Posterior vena cava (tissue), 2 donors: ENCODE measurements at regions of chr16 and their contacts with region 1.

Region 1: GRCh38 chr16:61149709-61150108 is 886.5 kb downstream of the CDH8 start:
- DNase-seq: peak; percentile 35

Region 2: GRCh38 chr16:61277840-61278239 is 128.1 kb after region 1 on chr16:
- intact Hi-C with region 1: no loop called
- DNase-seq: no peak

Region 3: DNA sequence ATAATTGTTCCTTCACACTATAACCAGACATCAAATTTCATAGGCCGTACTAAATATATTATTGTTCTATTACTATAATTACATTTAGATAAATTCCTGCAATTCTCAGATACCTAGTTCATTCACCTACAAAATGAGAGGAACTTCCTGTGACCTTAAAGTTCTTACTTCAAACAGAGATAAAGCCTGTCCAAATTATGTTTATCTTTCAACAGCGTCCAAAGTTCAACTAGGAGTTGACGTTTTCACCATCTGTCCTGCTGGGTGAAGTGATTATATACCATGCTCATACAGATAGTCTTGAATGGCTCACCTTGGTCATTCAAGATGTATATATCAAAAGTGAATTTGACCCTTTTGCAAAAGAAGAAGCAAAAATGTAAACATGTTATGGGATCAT is 445.9 kb after region 1 on chr16:
- intact Hi-C with region 1: loop called in 1 of 2 experiments (anchors 5 kb)
- DNase-seq: no peak

Region 4: DNA sequence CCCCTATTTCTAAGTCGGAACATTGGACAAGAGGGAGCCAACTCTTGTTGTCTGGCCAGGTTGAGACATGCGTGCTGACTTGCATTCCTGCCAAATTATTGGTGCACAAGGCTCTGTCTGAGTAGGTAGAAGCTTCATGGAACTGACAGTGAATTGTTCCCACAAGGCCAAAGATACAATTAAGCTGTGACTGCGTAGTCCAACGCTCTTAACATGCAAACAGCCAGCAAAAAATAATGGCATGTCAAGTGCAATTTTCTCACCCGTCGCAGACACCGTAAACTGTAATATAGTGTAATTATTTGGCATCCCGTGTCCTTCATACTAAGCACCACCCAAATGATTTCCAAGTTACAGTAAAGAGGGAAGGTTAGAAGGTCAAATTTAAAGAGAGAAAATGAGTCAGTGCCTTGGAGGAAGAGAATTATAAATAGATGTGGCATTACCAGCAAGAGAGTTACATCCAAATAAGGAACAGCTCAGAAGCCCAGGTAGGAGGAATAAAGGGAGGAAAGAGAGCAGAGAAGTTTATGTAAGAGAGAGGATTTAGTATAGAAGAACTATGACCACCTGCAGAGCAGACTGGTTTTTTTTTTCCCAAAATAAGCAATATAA is 864.7 kb after region 1 on chr16:
- intact Hi-C with region 1: loop called in 1 of 2 experiments (anchors 10 kb)
- DNase-seq: no peak